ENCODE measurements at regions of chr13 and their contacts with region 1.

Region 1: DNA sequence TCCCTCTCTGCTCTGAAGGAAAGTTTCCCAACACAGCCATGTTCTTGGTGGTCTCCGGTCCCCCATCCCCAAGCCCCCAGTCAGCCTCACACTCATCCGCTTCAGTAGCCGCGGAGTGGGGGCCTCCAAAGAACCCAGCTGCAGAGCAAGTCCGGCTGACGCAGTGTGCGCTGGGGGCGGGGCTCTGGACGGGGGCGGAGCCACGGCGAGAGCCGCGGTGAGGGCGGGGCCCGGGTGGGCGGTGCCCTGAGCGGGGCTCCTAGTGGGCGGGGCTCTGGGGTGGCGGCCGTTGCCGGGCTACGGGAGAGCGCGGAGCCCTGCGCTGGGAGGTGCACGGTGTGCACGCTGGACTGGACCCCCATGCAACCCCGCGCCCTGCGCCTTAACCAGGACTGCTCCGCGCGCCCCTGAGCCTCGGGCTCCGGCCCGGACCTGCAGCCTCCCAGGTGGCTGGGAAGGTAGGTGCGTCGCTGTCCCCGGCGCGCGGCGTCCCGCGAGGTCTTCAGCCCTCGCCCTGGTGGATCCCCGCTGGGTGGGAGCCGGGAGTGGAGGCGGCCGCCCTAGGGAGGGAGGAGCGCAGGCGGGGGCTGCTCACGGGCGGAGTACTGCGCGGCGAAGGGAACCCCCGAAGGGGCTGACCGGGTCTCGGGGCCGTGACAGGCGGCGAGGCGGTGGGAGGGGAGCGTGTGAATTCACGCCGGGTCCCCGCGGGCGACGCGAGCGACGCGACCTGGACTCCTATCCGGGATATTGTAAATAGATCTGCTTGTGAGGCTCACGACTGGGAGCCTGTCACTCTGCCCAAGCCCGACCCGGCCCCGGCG is 9.1 kb downstream of the TNFRSF19 start:
- DNase-seq: peak; percentile 94
- H3K4me3 ChIP-seq: peak overlapping the region; percentile 49 to 86 (median 75)
- H3K27ac ChIP-seq: peak overlapping the region; percentile 71 to 85 (median 76)
- H3K4me1 ChIP-seq: peaks cover 0 to 17% (median 14%) of the 10 kb centered on the region in 4 donors
- H3K27me3 ChIP-seq: peaks cover 0 to 8% (median 0%) of the 10 kb centered on the region in 3 donors
- CTCF ChIP-seq: no peak
- EP300 ChIP-seq: no peak
- POLR2A ChIP-seq: peak in 1 of 2 donors; percentile 22

Region 2: GRCh38 chr13:23375001-23375971 is 204.0 kb before region 1 on chr13:
- intact Hi-C with region 1: loop called (anchors 5 kb)
- DNase-seq: peak; percentile 98
- H3K4me3 ChIP-seq: peak overlapping the region; percentile 67 to 91 (median 78)
- H3K27ac ChIP-seq: peak overlapping the region; percentile 86 to 95 (median 90)
- H3K4me1 ChIP-seq: peaks cover 0 to 53% (median 35%) of the 10 kb centered on the region in 4 donors
- H3K27me3 ChIP-seq: no peaks in the 10 kb centered on the region
- CTCF ChIP-seq: peak in 1 of 4 experiments; percentile 19
- EP300 ChIP-seq: no peak
- POLR2A ChIP-seq: peak in 1 of 2 donors; percentile 23

Region 3: DNA sequence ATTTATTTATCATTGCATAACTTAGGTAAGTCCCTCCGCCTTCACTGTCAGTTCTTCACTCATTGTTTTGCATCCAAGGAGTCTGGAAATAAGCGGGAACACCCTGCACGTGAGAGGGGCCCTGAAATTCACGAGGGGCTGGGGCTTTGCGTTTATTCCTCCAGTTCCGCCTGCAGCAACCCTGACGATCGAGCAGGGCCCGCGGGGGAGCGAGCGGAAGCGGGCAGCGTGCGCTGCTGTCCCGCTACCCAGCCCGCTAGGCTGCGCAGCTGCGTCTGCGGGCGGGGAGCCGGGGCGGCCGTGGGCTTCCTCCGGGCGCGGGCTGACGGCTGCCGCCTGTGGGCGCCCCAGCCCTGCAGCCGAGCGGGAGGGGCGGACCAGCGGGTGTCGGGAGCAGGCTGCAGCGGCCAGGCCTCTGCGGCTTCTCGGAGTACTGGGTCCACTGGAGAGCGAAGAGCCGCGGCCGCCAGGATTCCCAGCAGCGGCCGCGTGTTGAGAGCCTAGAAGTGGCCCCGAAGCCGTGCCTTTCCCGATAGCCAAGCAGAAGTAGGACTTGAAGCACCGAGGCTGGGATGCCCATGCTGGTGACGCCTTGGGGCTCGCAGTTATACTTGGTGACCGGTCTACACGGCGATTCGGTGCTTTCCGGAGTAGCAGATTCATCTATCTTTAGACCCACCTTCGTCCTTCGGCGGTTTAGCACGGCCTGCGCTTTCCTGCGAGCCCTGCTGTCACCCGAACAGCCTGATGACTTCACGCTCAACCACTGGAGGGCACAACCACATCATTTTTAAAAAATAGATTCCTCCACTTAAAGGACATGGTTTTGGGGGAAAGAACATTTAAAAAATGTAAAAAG is 112.9 kb before region 1 on chr13:
- intact Hi-C with region 1: loop called (anchors 5 kb)
- DNase-seq: peak; percentile 82
- H3K4me3 ChIP-seq: peak overlapping the region; percentile 28 to 57 (median 50)
- H3K27ac ChIP-seq: peak overlapping the region; percentile 77 to 86 (median 84)
- H3K4me1 ChIP-seq: peaks cover 0 to 18% (median 9%) of the 10 kb centered on the region in 4 donors
- H3K27me3 ChIP-seq: no peaks in the 10 kb centered on the region
- CTCF ChIP-seq: peak; percentile 54 to 75 (median 62)
- EP300 ChIP-seq: no peak
- POLR2A ChIP-seq: no peak

Region 4: GRCh38 chr13:23871616-23872220 is 292.4 kb after region 1 on chr13:
- intact Hi-C with region 1: loop called (anchors 5 kb)
- DNase-seq: no peak
- H3K4me3 ChIP-seq: no peak overlapping the region
- H3K27ac ChIP-seq: no peak overlapping the region
- H3K4me1 ChIP-seq: peaks cover 0 to 13% (median 0%) of the 10 kb centered on the region in 4 donors
- H3K27me3 ChIP-seq: no peaks in the 10 kb centered on the region
- CTCF ChIP-seq: peak in 3 of 4 experiments; percentile 35 to 55 (median 39)
- EP300 ChIP-seq: no peak
- POLR2A ChIP-seq: no peak

Region 5: DNA sequence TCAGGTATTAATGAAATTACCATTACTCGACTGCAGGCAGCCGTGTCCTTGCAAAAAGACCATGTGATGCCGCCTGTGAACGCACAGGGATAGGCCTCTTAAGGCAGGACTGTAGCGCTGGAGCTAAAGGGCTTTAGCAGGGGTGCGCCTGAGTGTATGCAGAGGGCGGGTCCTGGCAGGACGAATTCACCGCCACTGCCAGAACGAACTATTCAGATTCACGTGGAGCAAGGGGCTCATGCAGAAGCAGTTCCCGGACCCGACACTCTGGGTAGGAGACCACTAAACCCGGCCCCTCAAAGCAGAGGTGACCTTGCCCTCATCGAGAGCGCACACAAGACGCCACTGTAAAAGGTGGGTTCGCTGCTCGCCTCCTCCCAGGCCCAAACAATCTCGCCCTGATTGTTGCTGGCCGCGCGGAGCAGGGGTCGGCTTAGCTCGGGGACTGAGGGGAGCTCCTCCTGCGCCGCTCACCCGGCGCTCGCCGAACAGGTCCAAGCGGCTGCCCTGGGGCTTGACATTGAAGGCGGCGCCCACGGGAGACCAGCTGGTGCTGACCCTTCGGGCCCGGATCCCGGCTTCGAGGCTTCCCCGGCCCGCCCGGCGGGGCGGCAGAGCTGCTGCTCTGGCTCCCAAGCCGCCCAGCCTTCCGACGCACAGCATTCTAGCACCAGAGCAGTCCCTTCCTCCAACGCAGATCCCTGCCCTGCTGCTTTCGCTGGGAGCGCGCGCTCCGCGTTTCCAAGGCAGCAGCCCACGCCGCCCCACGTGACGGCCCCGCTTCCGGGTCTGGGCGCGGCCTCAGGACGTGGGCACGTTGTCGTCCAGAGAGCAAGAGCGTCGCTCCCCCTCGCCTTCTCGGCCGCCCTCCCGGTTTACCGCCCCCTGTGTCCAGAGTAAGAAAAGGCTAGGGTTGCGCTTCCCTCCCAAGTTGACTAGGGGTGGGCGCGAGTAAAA is 309.7 kb after region 1 on chr13 and contains the start of gene MIPEP:
- intact Hi-C with region 1: loop called (anchors 5 kb)
- DNase-seq: peak; percentile 95
- H3K4me3 ChIP-seq: peak within 1 kb of the TSS; percentile 71 to 95 (median 88)
- H3K27ac ChIP-seq: peak within 1 kb of the TSS; percentile 91 to 93 (median 92)
- H3K4me1 ChIP-seq: peaks cover 0 to 15% (median 13%) of the 10 kb centered on the region in 4 donors
- H3K27me3 ChIP-seq: no peaks in the 10 kb centered on the region
- CTCF ChIP-seq: peak in 3 of 4 experiments; percentile 57 to 70 (median 62)
- EP300 ChIP-seq: no peak
- POLR2A ChIP-seq: peak; percentile 60 to 68
- total RNA-seq, gene MIPEP: 10.7 to 11.4 (median 11.1) TPM